ENCODE measurements at regions of chr9 and their contacts with region 1.

Region 1: GRCh38 chr9:114906908-114907571 is 23.4 kb downstream of the TNFSF8 start:
- DNase-seq: peak; percentile 78
- H3K4me3 Mint-ChIP-seq: peak overlapping the region; percentile 65
- H3K27ac Mint-ChIP-seq: peak overlapping the region; percentile 94
- H3K4me1 Mint-ChIP-seq: peaks cover 92% of the 10 kb centered on the region
- H3K27me3 Mint-ChIP-seq: no peaks in the 10 kb centered on the region

Region 2: GRCh38 chr9:114487607-114488300 is 419.3 kb before region 1 on chr9:
- intact Hi-C with region 1: loop called (anchors 5 kb)
- DNase-seq: peak; percentile 92
- H3K4me3 Mint-ChIP-seq: no peak overlapping the region
- H3K27ac Mint-ChIP-seq: peak overlapping the region; percentile 12
- H3K4me1 Mint-ChIP-seq: peaks cover 32% of the 10 kb centered on the region
- H3K27me3 Mint-ChIP-seq: peaks cover 8% of the 10 kb centered on the region

Region 3: GRCh38 chr9:114691046-114691955 is 215.7 kb before region 1 on chr9:
- intact Hi-C with region 1: loop called (anchors 2 kb)
- DNase-seq: peak; percentile 93
- H3K4me3 Mint-ChIP-seq: peak overlapping the region; percentile 59
- H3K27ac Mint-ChIP-seq: peak overlapping the region; percentile 97
- H3K4me1 Mint-ChIP-seq: peaks cover 80% of the 10 kb centered on the region
- H3K27me3 Mint-ChIP-seq: no peaks in the 10 kb centered on the region

Region 4: GRCh38 chr9:114738581-114739316 is 168.3 kb before region 1 on chr9:
- intact Hi-C with region 1: loop called (anchors 1 kb)
- DNase-seq: peak; percentile 91
- H3K4me3 Mint-ChIP-seq: peak overlapping the region; percentile 33
- H3K27ac Mint-ChIP-seq: peak overlapping the region; percentile 93
- H3K4me1 Mint-ChIP-seq: peaks cover 63% of the 10 kb centered on the region
- H3K27me3 Mint-ChIP-seq: no peaks in the 10 kb centered on the region

Region 5: GRCh38 chr9:114894801-114895433 is 12.1 kb before region 1 on chr9:
- intact Hi-C with region 1: loop called (anchors 1 kb)
- DNase-seq: peak; percentile 83
- H3K4me3 Mint-ChIP-seq: peak overlapping the region; percentile 32
- H3K27ac Mint-ChIP-seq: peak overlapping the region; percentile 89
- H3K4me1 Mint-ChIP-seq: peaks cover 48% of the 10 kb centered on the region
- H3K27me3 Mint-ChIP-seq: no peaks in the 10 kb centered on the region

Region 6: GRCh38 chr9:114930056-114930812 is 23.2 kb after region 1 on chr9 and contains the start of gene TNFSF8:
- intact Hi-C with region 1: loop called (anchors 1 kb)
- DNase-seq: peak; percentile 94
- H3K4me3 Mint-ChIP-seq: peak within 1 kb of the TSS; percentile 90
- H3K27ac Mint-ChIP-seq: peak within 1 kb of the TSS; percentile 99
- H3K4me1 Mint-ChIP-seq: peaks cover 59% of the 10 kb centered on the region
- H3K27me3 Mint-ChIP-seq: no peaks in the 10 kb centered on the region
- total RNA-seq, gene TNFSF8: 148 and 150 TPM in 2 replicates

Region 7: DNA sequence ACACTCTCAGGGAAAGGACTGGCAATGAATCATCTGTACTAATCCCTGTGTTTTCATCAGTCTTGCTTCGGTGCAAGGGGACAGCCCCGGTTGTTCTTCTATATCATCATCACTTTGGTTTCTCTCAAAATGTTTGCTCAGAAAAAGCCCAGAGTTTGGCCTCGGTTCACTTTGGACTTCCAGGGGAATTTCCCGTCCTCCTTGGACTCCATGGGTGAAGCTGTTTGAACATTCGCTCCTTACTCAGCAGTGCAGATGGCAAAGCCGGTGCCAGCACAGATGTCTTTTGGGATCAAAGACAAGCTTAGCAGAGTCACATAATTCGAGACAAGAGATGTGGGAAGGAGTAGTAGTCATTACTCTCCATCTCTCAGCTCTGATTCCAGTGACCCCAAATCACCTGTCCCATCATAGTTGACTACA is 93.2 kb after region 1 on chr9:
- intact Hi-C with region 1: no loop called
- DNase-seq: no peak
- H3K4me3 Mint-ChIP-seq: peak overlapping the region; percentile 10
- H3K27ac Mint-ChIP-seq: peak overlapping the region; percentile 80
- H3K4me1 Mint-ChIP-seq: peaks cover 42% of the 10 kb centered on the region
- H3K27me3 Mint-ChIP-seq: no peaks in the 10 kb centered on the region

Region 8: GRCh38 chr9:115013998-115014397 is 107.0 kb after region 1 on chr9:
- intact Hi-C with region 1: loop called (anchors 1 kb)
- DNase-seq: peak; percentile 93
- H3K4me3 Mint-ChIP-seq: peak overlapping the region; percentile 18
- H3K27ac Mint-ChIP-seq: peak overlapping the region; percentile 77
- H3K4me1 Mint-ChIP-seq: peaks cover 55% of the 10 kb centered on the region
- H3K27me3 Mint-ChIP-seq: peaks cover 2% of the 10 kb centered on the region

Measured in activated CD4-positive, alpha-beta T cell treated with anti-CD3 and anti-CD28 coated beads, Interleukin-2, amount 10 ng/mL, durations not matched to agents 24 days and 14 days (primary cell).